ENCODE measurements at regions of chr13 and their contacts with region 1.

Region 1: GRCh38 chr13:31538067-31539042 is 201.0 kb upstream of the RXFP2 start:
- DNase-seq: peak; percentile 34
- H3K4me3 ChIP-seq: no peak overlapping the region; a peak in 1 of 4 replicates
- H3K27ac ChIP-seq: no peak overlapping the region
- H3K4me1 ChIP-seq: no peaks in the 10 kb centered on the region; a peak in 2 of 4 replicates
- H3K27me3 ChIP-seq: no peaks in the 10 kb centered on the region
- CTCF ChIP-seq: peak; percentile 68
- EP300 ChIP-seq: no peak
- RAD21 ChIP-seq: peak; percentile 75

Region 2: DNA sequence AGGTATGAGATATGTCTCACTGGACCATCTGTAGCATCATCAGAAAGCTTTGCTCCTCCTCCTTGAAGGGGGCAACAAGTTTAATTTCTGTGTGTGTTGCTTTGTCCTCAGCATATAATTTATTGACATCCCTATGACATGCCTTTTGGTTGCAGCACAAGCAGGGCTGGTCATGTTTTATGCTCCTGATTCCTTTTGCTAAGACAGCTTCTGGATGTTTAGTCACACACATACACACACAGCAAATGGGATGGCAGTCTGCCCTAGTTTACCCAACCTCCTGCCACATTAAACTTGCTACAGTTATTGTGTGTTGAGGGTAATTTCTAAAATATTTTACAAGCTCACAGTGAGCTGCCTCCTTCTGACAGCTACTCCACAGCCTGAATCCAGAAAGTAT is 16.9 kb before region 1 on chr13:
- CTCF ChIA-PET with region 1: interaction called, 10 read pairs
- POLR2A ChIA-PET with region 1: no interaction called
- DNase-seq: no peak
- H3K4me3 ChIP-seq: no peak overlapping the region
- H3K27ac ChIP-seq: no peak overlapping the region
- H3K4me1 ChIP-seq: no peaks in the 10 kb centered on the region; a peak in 1 of 4 replicates
- H3K27me3 ChIP-seq: no peaks in the 10 kb centered on the region
- CTCF ChIP-seq: no peak
- EP300 ChIP-seq: no peak
- RAD21 ChIP-seq: no peak

Region 3: DNA sequence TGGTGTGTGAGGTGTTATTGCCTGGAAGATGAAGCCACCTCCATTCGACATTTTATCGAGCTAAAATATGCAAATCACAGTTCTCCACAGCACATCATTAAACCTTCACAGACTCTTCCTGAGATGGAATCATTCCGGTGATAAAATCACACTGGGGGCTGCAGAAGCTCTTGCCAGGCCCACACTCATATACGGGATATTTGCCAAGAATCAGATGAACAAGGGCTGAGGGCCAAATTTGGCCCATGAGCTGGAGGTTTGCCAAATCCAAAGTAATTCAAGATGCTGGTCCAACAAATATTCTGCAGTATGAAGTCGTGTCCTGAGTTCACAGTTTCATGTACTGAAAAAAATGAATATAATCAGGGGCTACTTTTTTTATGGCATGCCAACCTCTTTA is 184.3 kb after region 1 on chr13:
- CTCF ChIA-PET with region 1: interaction called, 10 read pairs
- POLR2A ChIA-PET with region 1: no interaction called
- DNase-seq: peak; percentile 68
- H3K4me3 ChIP-seq: peak overlapping the region in 1 of 2 experiments; percentile 28; a peak in 2 of 4 replicates
- H3K27ac ChIP-seq: peak overlapping the region; percentile 16 to 87; a peak in 3 of 4 replicates
- H3K4me1 ChIP-seq: peaks cover 3 to 13% of the 10 kb centered on the region in 2 experiments; a peak in 2 of 4 replicates
- H3K27me3 ChIP-seq: no peaks in the 10 kb centered on the region
- CTCF ChIP-seq: no peak
- EP300 ChIP-seq: peak; percentile 83 to 96
- RAD21 ChIP-seq: peak; percentile 32; the same call in 1 of the 2 replicates

Region 4: DNA sequence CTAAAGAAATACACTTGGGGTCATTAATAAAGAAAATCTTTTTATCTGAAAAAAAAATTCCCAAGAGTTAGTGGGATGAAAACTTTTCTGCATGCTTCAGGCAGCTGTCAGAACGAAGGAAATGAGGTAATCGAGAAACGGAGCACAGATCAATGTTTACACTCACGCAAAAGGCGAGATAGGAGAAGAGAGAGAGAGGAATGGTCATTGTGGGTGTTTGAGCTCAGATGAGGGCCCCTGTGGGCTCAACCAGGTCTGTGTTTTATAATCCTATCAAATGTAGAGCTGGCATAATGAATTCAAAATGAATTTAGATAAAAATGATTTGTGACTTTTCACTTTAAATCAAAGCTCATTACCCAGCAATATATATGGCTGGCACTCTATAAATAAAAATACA is 194.7 kb after region 1 on chr13:
- CTCF ChIA-PET with region 1: interaction called, 28 read pairs
- POLR2A ChIA-PET with region 1: no interaction called
- DNase-seq: peak; percentile 44
- H3K4me3 ChIP-seq: no peak overlapping the region; a peak in 1 of 4 replicates
- H3K27ac ChIP-seq: no peak overlapping the region; a peak in 1 of 4 replicates
- H3K4me1 ChIP-seq: peaks cover 0 to 17% of the 10 kb centered on the region in 2 experiments; a peak in 2 of 4 replicates
- H3K27me3 ChIP-seq: no peaks in the 10 kb centered on the region
- CTCF ChIP-seq: no peak
- EP300 ChIP-seq: peak in 1 of 2 experiments; percentile 88; a peak in 2 of 4 replicates
- RAD21 ChIP-seq: peak; percentile 30; the same call in 1 of the 2 replicates

Region 5: DNA sequence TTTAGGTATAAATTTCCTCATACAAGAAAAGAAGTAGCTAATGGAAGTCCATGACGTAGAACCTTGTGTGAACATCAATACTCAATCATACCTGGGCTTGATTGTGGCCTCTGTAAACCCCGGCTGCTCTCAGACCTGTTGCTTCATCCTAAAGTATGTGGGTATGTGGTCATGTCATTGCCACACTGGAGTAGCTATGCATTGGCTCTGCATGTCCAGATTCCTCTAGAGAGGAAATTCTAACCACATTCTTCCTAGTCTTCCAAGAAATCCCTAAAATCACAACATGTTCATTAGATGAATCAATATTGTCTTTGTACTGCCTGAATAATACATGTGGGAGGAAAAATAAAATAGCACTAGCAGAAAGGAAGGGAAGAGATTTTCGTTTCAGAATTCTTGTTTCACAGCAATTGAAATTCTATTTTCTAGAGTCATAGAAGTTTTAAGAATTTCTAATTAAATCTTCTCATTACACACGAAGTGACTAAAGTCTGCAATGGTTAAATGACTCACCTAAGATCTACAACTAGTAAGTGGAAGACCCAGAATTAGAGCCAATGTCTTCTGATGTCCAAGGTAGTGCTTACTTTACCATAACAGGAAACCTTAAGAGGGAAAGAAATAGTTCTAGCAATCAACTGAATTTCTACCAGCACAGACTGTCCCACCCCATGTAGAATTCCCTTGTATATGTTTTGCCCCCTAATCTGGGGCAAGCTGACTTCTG is 229.0 kb after region 1 on chr13:
- CTCF ChIA-PET with region 1: no interaction called
- POLR2A ChIA-PET with region 1: no interaction called
- DNase-seq: no peak
- H3K4me3 ChIP-seq: no peak overlapping the region
- H3K27ac ChIP-seq: peak overlapping the region in 1 of 2 experiments; percentile 81; a peak in 2 of 4 replicates
- H3K4me1 ChIP-seq: peaks cover 0 to 36% of the 10 kb centered on the region in 2 experiments; a peak in 2 of 4 replicates
- H3K27me3 ChIP-seq: no peaks in the 10 kb centered on the region
- CTCF ChIP-seq: no peak
- EP300 ChIP-seq: peak in 1 of 2 experiments; percentile 17; a peak in 1 of 4 replicates
- RAD21 ChIP-seq: no peak

Measured in SK-N-SH (cell line).